A673 (cell line): ENCODE measurements at regions of chr9 and their contacts with region 1.

Region 1: DNA sequence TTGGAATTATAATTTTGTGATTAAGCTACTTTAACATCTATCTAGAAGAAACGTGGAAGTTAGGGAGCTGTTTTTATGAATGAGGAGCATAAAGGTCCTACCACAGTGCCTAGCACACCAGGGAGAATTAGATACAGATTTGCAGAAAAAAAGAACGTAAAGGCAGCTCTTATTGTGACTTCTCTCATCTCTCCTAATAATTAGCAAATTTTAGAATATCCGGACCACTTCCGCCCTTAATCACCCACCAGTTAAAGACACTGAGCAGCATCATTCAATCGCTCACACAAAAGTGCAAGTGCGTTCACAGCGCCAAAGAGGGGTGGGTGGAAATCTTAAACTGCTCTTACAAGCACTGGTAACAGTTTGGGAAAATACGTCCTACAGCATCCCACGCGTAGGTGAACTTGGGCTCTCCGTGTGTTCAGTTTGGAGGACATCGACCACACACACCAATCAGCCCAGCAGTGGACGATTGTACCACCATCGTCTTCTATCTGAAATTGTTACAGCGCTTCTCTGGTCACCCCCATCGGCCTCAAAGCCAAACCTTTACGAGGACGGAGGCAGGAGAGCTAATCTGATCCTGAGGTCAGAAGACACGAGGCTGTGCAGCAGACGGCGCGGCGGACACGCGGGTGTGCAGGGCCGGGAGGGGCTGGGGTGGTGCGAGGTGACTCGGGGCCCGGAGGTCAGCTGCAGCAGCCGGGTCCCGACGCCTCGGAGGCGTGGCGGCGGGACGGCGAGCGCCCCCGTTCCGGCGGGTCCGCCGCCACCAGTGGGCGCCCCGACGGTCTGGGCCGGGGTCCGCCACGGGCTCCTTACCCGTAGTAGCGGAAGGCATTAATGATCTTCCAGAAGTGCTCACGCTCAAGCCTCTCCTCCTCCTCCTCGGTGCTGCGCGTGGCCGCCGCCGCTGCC is 646 bp downstream of the CARNMT1 start:
- DNase-seq: peak; percentile 54
- H3K4me3 ChIP-seq: peak overlapping the region; percentile 78
- H3K27ac ChIP-seq: peak overlapping the region; percentile 85
- H3K4me1 ChIP-seq: no peaks in the 10 kb centered on the region
- H3K27me3 ChIP-seq: peaks cover 3% of the 10 kb centered on the region
- CTCF ChIP-seq: 0 out of 2 replicates have a peak, but pooled peaks have one; percentile 2

Region 2: DNA sequence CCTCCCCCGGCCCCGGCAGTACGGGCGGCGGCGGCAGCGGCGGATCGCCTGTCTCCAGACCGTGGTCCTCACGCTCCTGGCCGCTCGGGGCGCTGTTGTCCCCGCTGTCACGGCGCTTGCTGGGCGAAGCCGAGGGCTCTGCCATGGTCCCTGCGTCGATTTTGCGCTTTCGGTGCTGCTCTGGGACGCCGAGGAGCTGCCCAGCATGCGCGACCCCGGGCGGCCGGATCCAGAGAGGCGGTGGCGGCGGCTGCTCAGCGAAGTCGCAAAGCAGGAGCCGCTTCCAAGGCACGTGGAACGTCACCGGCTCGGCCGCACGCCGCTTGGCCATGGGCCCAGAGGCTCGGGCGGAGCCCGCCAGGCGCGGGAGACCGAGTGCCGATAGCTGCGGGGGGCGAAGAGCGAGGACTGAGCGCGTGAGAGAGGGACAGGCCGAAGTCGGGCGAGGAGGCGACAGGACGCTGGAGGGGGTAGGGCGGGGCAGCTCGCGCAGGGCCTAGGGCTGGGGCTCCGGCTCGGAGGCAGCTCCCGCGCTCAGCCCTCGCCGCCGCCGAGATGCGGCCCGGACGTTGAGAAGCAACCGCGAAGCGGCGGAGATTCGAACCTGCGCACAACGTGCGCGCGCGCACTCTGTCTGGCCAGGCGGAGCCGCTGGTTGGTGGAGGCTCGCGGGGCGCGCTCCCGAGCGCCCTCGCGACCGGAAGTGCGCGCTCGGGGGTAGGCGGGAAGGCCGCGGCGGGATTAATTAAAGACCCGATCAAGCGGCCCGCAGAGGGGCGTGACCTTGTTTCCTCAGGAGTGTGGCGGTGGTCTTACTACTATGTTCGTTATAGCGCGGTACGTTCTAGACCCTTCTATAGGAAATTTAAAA is 74.9 kb before region 1 on chr9 and contains the start of gene C9orf40:
- CTCF ChIA-PET with region 1: no interaction called
- POLR2A ChIA-PET with region 1: no interaction called
- intact Hi-C with region 1: loop called (anchors 5 kb)
- DNase-seq: peak; percentile 91
- H3K4me3 ChIP-seq: peak within 1 kb of the TSS; percentile 94
- H3K27ac ChIP-seq: peak within 1 kb of the TSS; percentile 93
- H3K4me1 ChIP-seq: peaks cover 11% of the 10 kb centered on the region
- H3K27me3 ChIP-seq: no peaks in the 10 kb centered on the region
- CTCF ChIP-seq: peak; percentile 77
- total RNA-seq, gene C9orf40: 11.9 and 16.8 TPM in 2 replicates

Region 3: GRCh38 chr9:75333624-75334023 is 306.2 kb after region 1 on chr9:
- CTCF ChIA-PET with region 1: no interaction called
- POLR2A ChIA-PET with region 1: no interaction called
- intact Hi-C with region 1: no loop called
- DNase-seq: no peak
- H3K4me3 ChIP-seq: no peak overlapping the region
- H3K27ac ChIP-seq: no peak overlapping the region
- H3K4me1 ChIP-seq: no peaks in the 10 kb centered on the region
- H3K27me3 ChIP-seq: no peaks in the 10 kb centered on the region
- CTCF ChIP-seq: peak; percentile 41; the same call in 1 of the 2 replicates